Endothelial cell of umbilical vein (primary cell): ENCODE measurements at regions of chr16 and their contacts with region 1.

Region 1: DNA sequence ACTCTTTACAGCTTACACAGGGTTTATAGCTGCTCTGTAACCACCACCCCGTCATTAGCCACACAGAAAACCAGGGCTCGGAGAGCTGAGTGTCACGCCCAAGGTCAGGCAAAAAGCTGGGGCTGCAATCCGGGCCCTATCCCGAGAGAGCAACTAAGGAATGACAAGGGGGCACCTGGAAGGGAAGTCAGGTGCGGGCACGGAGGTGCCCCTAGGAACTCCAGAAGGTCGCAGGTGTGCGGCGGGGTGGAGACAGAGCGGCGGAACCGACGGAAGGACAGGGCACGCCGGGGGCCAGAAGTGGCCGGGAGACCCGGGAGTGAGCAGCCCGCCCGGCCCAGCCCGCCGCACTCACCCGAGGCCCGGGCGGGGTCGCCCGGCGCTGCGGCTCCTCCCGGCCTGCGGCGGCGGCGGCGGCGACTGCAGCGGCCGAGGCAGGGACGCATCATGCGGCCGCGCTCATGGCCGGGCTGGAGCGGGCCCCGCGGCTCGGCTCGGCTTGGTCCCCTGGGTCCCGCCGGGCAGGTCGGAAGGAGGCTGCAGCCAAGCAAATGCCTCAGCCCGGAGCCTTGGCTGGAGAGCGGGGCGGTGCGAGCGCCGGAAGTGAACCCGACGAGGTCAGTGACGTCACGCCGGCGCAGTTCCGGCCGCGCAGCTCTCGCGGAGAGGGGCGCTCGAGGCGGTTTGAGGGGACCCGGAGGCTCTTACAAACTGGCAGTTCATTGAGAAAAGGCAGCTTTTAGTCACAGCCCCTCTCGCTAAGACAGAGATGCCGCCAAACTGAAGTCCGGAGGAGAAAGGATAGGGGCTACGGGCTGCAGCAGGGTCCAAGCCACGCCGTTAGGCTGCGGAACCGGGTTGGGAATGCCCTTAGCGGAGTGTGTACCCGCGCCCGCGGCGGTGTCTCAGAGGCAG is at the start of gene ZDHHC7:
- DNase-seq: peak; percentile 88
- H3K4me3 ChIP-seq: peak within 1 kb of the TSS; percentile 59 to 91 (median 74)
- H3K27ac ChIP-seq: peak within 1 kb of the TSS; percentile 97
- H3K4me1 ChIP-seq: peaks cover 9% of the 10 kb centered on the region
- H3K27me3 ChIP-seq: no peaks in the 10 kb centered on the region
- CTCF ChIP-seq: no peak
- POLR2A ChIP-seq: peak; percentile 88
- total RNA-seq, gene ZDHHC7: 40.4 and 44.1 TPM in 2 replicates

Region 2: GRCh38 chr16:85027349-85027957 is 16.3 kb after region 1 on chr16 and contains the start of gene KIAA0513:
- CTCF ChIA-PET with region 1: interaction called, 5 read pairs
- POLR2A ChIA-PET with region 1: interaction called, 5 read pairs
- dilution Hi-C with region 1: no loop called
- intact Hi-C with region 1: loop called (anchors 1 kb)
- DNase-seq: peak; percentile 94
- H3K4me3 ChIP-seq: peak within 1 kb of the TSS; percentile 65 to 90 (median 90)
- H3K27ac ChIP-seq: peak within 1 kb of the TSS; percentile 73
- H3K4me1 ChIP-seq: peaks cover 24% of the 10 kb centered on the region
- H3K27me3 ChIP-seq: no peaks in the 10 kb centered on the region
- CTCF ChIP-seq: peak in 1 of 2 donors; percentile 33
- POLR2A ChIP-seq: peak; percentile 94
- total RNA-seq, gene KIAA0513: 3.6 and 4.3 TPM in 2 replicates

Region 3: GRCh38 chr16:85136702-85137322 is 125.6 kb after region 1 on chr16:
- CTCF ChIA-PET with region 1: no interaction called
- POLR2A ChIA-PET with region 1: no interaction called
- dilution Hi-C with region 1: no loop called
- intact Hi-C with region 1: no loop called
- DNase-seq: no peak
- H3K4me3 ChIP-seq: no peak overlapping the region
- H3K27ac ChIP-seq: no peak overlapping the region
- H3K4me1 ChIP-seq: peaks cover 29% of the 10 kb centered on the region
- H3K27me3 ChIP-seq: no peaks in the 10 kb centered on the region
- CTCF ChIP-seq: no peak
- POLR2A ChIP-seq: no peak